HEK293 (cell line): ENCODE measurements at regions of chr7 and their contacts with region 1.

Region 1: GRCh38 chr7:129091484-129092002 is 36.6 kb upstream of the TNPO3 start:
- H3K4me3 ChIP-seq: no peak overlapping the region
- H3K27ac ChIP-seq: no peak overlapping the region
- H3K4me1 ChIP-seq: no peaks in the 10 kb centered on the region
- CTCF ChIP-seq: peak; percentile 94

Region 2: GRCh38 chr7:128763541-128763940 is 328.0 kb before region 1 on chr7:
- CTCF ChIA-PET with region 1: no interaction called
- POLR2A ChIA-PET with region 1: no interaction called
- H3K4me3 ChIP-seq: no peak overlapping the region
- H3K27ac ChIP-seq: no peak overlapping the region
- H3K4me1 ChIP-seq: no peaks in the 10 kb centered on the region
- CTCF ChIP-seq: no peak

Region 3: DNA sequence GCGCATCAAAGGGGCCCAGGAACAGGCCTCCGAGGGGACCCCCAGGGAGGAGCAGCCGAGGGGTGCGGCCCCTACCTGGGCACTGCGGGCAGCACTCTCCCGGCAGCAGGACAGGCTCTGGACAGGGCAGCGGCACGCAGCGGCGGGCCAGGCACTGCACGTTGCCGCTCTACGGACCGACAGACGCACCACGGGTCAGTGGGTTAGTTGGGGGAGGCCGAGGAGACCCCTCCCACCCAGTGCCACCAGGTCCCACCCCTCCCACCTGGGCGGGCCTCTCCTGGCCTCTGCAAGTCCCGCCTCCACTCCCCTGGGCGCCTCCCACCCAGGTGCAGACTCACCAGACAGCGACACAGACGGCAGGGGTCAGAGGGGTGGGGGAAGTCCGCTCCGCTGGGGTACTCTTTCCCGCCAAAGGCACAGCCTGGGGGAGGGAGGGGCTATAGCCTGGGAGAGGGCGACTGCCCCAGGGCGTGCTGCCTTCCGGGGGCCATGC is 200.4 kb before region 1 on chr7:
- CTCF ChIA-PET with region 1: interaction called, 11 read pairs
- POLR2A ChIA-PET with region 1: no interaction called
- H3K4me3 ChIP-seq: no peak overlapping the region
- H3K27ac ChIP-seq: no peak overlapping the region
- H3K4me1 ChIP-seq: no peaks in the 10 kb centered on the region
- CTCF ChIP-seq: no peak

Region 4: DNA sequence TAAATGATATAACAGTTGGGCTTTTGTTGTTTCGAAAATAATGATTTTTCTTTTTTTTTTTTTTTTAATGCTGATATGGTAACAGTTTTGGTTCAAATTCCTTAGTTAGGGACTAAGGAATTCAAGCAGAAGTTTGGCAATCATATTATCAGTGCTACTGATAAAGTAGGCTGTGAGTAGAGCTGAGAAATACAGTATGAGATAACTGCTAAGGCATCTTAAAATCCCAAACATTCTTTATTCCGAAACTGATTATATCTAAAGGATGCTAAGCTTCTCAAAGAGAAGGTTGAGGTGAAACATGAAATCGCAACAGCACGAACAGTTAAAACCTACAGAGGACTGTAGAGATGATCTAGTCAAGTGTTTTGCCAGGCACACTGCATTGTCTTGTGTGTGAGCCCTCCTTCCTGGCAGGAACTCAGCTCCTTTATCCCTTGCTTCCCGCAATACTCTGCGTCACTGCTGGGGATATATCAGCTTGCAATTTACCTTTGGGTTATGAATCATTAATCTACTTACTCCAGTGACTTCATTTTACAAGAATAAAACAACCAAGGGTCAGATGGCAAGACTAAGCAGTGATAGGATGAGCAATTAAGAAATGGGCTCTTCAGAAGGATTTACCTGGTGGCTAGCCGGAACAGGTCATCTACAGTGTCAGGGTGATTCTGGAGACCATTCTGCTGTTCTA is 117.2 kb before region 1 on chr7:
- CTCF ChIA-PET with region 1: interaction called, 15 read pairs
- POLR2A ChIA-PET with region 1: no interaction called
- H3K4me3 ChIP-seq: no peak overlapping the region
- H3K27ac ChIP-seq: no peak overlapping the region
- H3K4me1 ChIP-seq: no peaks in the 10 kb centered on the region
- CTCF ChIP-seq: no peak

Region 5: GRCh38 chr7:129054438-129055293 is 36.9 kb before region 1 on chr7 and contains the start of gene TNPO3:
- CTCF ChIA-PET with region 1: interaction called, 12 read pairs
- POLR2A ChIA-PET with region 1: interaction called, 15 read pairs
- H3K4me3 ChIP-seq: peak within 1 kb of the TSS; percentile 78
- H3K27ac ChIP-seq: peak within 1 kb of the TSS; percentile 88
- H3K4me1 ChIP-seq: no peaks in the 10 kb centered on the region
- CTCF ChIP-seq: peak; percentile 73

Region 6: GRCh38 chr7:129101746-129102145 is 10.2 kb after region 1 on chr7:
- CTCF ChIA-PET with region 1: interaction called, 19 read pairs
- POLR2A ChIA-PET with region 1: no interaction called
- H3K4me3 ChIP-seq: no peak overlapping the region
- H3K27ac ChIP-seq: no peak overlapping the region
- H3K4me1 ChIP-seq: no peaks in the 10 kb centered on the region
- CTCF ChIP-seq: no peak